CD4-positive, alpha-beta memory T cell (primary cell): ENCODE measurements at regions of chr9 and their contacts with region 1.

Region 1: GRCh38 chr9:19174127-19174912 is 47.0 kb upstream of the PLIN2 start:
- DNase-seq: peak; percentile 34 to 56 (median 46)
- H3K4me3 ChIP-seq: no peak overlapping the region
- H3K4me3 Mint-ChIP-seq: peak overlapping the region in 1 of 8 donors; percentile 43
- H3K27ac ChIP-seq: no peak overlapping the region
- H3K27ac Mint-ChIP-seq: peak overlapping the region in 5 of 7 donors; percentile 25 to 83 (median 66)
- H3K4me1 ChIP-seq: peaks cover 18% of the 10 kb centered on the region
- H3K4me1 Mint-ChIP-seq: peaks cover 18 to 35% (median 26%) of the 10 kb centered on the region in 4 donors
- H3K27me3 ChIP-seq: no peaks in the 10 kb centered on the region
- H3K27me3 Mint-ChIP-seq: no peaks in the 10 kb centered on the region

Region 2: GRCh38 chr9:18255158-18255629 is 919.1 kb before region 1 on chr9:
- CTCF ChIA-PET with region 1: interaction called, 16 read pairs
- POLR2A ChIA-PET with region 1: no interaction called
- intact Hi-C with region 1: loop called (anchors 1 kb)
- DNase-seq: peak; percentile 42 to 59 (median 56)
- H3K4me3 ChIP-seq: no peak overlapping the region
- H3K4me3 Mint-ChIP-seq: no peak overlapping the region
- H3K27ac ChIP-seq: no peak overlapping the region
- H3K27ac Mint-ChIP-seq: no peak overlapping the region
- H3K4me1 ChIP-seq: no peaks in the 10 kb centered on the region
- H3K4me1 Mint-ChIP-seq: peaks cover 0 to 4% (median 2%) of the 10 kb centered on the region in 4 donors
- H3K27me3 ChIP-seq: no peaks in the 10 kb centered on the region
- H3K27me3 Mint-ChIP-seq: peaks cover 8% of the 10 kb centered on the region in 2 donors

Region 3: DNA sequence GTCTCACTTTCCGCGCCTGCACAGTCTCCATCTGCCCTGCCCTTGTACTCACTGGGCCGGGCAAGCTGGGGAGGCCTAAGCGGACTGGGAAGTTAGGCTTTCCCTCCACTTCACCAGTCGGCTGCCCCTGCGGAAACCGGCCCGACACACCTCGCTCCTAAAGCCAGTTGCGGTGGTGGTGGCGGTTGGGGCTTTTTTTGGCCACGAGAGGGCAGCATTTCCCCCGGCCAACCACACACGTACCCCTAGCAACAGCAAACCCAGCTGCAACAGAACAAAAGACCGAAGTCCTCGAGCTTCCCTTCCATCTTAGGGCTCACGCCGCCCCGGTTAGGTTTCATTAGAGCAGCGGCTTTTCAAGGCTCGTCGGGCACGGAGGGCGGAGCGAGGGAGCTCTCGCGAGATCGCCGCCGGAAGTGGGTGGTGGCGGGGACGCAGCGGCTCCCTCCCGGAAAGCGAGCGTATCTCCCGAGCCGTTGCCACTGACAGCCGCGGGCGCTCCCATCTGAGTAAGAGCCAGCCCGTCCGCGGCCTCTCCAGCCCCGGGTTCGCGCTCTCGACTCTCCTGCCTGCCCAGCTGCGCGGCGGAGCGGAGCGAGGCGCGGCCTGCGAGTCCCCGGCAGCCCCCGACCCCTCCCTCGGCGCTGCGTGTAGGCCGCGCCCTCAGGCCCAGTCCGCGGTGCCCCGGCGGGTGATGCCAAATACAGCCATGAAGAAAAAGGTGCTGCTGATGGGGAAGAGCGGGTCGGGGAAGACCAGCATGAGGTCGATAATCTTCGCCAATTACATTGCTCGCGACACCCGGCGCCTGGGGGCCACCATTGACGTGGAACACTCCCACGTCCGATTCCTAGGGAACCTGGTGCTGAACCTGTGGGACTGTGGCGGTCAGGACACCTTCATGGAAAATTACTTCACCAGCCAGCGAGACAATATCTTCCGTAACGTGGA is 125.1 kb before region 1 on chr9 and contains the start of gene RRAGA:
- CTCF ChIA-PET with region 1: interaction called, 35 read pairs
- POLR2A ChIA-PET with region 1: interaction called, 28 read pairs
- intact Hi-C with region 1: loop called (anchors 1 kb)
- DNase-seq: peak; percentile 94 to 96 (median 95)
- H3K4me3 ChIP-seq: peak within 1 kb of the TSS; percentile 84 to 96
- H3K4me3 Mint-ChIP-seq: peak within 1 kb of the TSS; percentile 91 to 99 (median 96)
- H3K27ac ChIP-seq: peak within 1 kb of the TSS; percentile 87
- H3K27ac Mint-ChIP-seq: peak within 1 kb of the TSS; percentile 96 to 100 (median 99)
- H3K4me1 ChIP-seq: peaks cover 39% of the 10 kb centered on the region
- H3K4me1 Mint-ChIP-seq: peaks cover 21 to 56% (median 40%) of the 10 kb centered on the region in 4 donors
- H3K27me3 ChIP-seq: no peaks in the 10 kb centered on the region
- H3K27me3 Mint-ChIP-seq: no peaks in the 10 kb centered on the region
- total RNA-seq, gene RRAGA: 57.4 to 58.0 TPM

Region 4: GRCh38 chr9:19102631-19103345 is 71.5 kb before region 1 on chr9 and contains the start of gene HAUS6:
- CTCF ChIA-PET with region 1: interaction called, 12 read pairs
- POLR2A ChIA-PET with region 1: no interaction called
- intact Hi-C with region 1: loop called (anchors 5 kb)
- DNase-seq: peak; percentile 93 to 98 (median 96)
- H3K4me3 ChIP-seq: peak within 1 kb of the TSS; percentile 73 to 74
- H3K4me3 Mint-ChIP-seq: peak within 1 kb of the TSS; percentile 91 to 98 (median 98)
- H3K27ac ChIP-seq: peak within 1 kb of the TSS; percentile 74
- H3K27ac Mint-ChIP-seq: peak within 1 kb of the TSS; percentile 91 to 98 (median 96)
- H3K4me1 ChIP-seq: peaks cover 28% of the 10 kb centered on the region
- H3K4me1 Mint-ChIP-seq: peaks cover 15 to 39% (median 20%) of the 10 kb centered on the region in 4 donors
- H3K27me3 ChIP-seq: no peaks in the 10 kb centered on the region
- H3K27me3 Mint-ChIP-seq: no peaks in the 10 kb centered on the region
- total RNA-seq, gene HAUS6: 19.4 to 20.9 TPM

Region 5: GRCh38 chr9:19127881-19128500 is 46.3 kb before region 1 on chr9:
- CTCF ChIA-PET with region 1: interaction called, 23 read pairs
- POLR2A ChIA-PET with region 1: interaction called, 3 read pairs
- intact Hi-C with region 1: loop called (anchors 1 kb)
- DNase-seq: peak in 3 of 5 donors; percentile 36 to 52 (median 37)
- H3K4me3 ChIP-seq: peak overlapping the region; percentile 57 to 79
- H3K4me3 Mint-ChIP-seq: peak overlapping the region; percentile 92 to 98 (median 96)
- H3K27ac ChIP-seq: peak overlapping the region; percentile 73
- H3K27ac Mint-ChIP-seq: peak overlapping the region; percentile 90 to 96 (median 94)
- H3K4me1 ChIP-seq: peaks cover 61% of the 10 kb centered on the region
- H3K4me1 Mint-ChIP-seq: peaks cover 38 to 63% (median 48%) of the 10 kb centered on the region in 4 donors
- H3K27me3 ChIP-seq: no peaks in the 10 kb centered on the region
- H3K27me3 Mint-ChIP-seq: no peaks in the 10 kb centered on the region

Region 6: DNA sequence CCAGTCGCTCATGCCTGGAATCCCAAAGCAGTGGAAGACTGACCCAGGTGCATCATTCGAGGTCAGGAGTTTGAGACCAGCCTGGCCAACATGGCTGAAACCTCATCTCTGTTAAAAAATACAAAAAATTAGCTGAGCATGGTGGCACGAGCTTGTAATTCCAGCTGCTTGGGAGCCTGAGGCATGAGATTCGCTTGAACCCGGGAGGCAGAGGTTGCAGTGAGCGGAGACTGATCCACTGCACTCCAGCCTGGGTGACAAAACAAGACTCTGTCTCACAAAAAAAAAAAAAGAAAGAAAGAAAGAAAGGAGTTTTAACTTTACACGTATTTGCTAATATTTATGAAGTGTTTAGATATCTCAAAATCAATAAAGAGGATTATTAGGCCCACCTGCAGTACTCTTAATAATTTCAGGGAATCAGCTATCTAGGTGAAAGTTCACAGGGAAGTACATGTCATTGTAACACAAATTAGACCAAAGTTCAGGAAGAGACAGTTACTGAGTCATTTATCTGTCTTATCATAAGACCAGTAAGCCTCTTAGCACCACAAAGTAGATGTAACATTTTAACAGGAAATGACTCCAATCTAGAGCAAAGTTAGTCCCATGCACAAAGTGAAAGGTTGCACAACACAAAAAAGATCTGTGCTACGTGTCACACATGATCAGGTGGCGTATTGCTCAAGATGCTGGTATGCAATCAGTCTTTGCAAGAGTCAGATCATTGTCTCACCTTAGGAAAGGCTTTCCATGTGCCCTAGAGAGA is 12.9 kb before region 1 on chr9:
- CTCF ChIA-PET with region 1: interaction called, 16 read pairs
- POLR2A ChIA-PET with region 1: interaction called, 7 read pairs
- intact Hi-C with region 1: no loop called
- DNase-seq: peak; percentile 50 to 75 (median 60)
- H3K4me3 ChIP-seq: no peak overlapping the region
- H3K4me3 Mint-ChIP-seq: peak overlapping the region in 7 of 8 donors; percentile 56 to 75 (median 67)
- H3K27ac ChIP-seq: peak overlapping the region; percentile 52
- H3K27ac Mint-ChIP-seq: peak overlapping the region; percentile 73 to 96 (median 89)
- H3K4me1 ChIP-seq: peaks cover 18% of the 10 kb centered on the region
- H3K4me1 Mint-ChIP-seq: peaks cover 11 to 19% (median 14%) of the 10 kb centered on the region in 4 donors
- H3K27me3 ChIP-seq: no peaks in the 10 kb centered on the region
- H3K27me3 Mint-ChIP-seq: no peaks in the 10 kb centered on the region

Region 7: DNA sequence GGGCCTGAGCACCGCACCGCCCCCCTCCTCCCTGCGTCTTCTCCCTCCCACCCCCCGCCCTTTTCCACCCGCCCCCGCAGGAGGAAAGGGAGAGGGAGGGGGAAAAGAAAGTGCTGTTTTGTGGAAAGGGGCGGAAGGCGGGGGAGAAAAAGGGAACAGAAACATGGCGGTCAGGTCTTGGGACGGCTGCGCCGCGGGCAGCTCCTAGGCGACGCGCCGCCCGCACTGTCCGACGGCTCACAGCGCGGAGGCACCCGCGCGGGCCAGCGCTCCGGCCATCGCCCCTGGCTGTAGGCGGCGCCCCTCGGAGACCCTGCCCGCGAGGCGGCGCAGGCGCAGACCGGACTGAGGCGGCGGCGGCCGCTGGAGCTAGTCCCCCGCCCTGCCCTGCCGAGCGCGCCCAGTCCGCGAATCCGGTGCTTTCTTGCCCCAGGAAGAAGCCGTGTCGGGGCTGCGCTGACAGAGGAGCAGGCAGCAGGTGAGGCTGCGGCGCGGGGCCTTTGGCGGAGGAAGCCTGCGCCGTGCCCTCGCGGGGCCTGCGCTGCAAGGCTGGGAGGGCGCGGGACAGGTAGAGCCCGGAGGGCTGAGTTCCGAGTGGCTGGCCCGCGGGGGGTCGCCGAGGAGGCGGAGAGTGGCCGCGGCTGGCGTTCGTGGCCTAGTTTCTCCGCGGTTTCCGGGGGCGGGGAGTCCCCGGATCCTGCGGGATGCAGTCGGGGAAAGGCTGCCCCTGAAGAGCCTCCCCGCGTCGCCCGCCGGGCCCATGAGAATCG is 56.2 kb after region 1 on chr9 and contains the start of gene DENND4C:
- CTCF ChIA-PET with region 1: interaction called, 12 read pairs
- POLR2A ChIA-PET with region 1: interaction called, 4 read pairs
- intact Hi-C with region 1: no loop called
- DNase-seq: peak; percentile 85 to 87 (median 85)
- H3K4me3 ChIP-seq: peak within 1 kb of the TSS; percentile 53 to 73
- H3K4me3 Mint-ChIP-seq: peak within 1 kb of the TSS in 6 of 8 donors; percentile 82 to 89 (median 88)
- H3K27ac ChIP-seq: peak within 1 kb of the TSS; percentile 73
- H3K27ac Mint-ChIP-seq: peak within 1 kb of the TSS in 6 of 7 donors; percentile 62 to 93 (median 90)
- H3K4me1 ChIP-seq: peaks cover 25% of the 10 kb centered on the region
- H3K4me1 Mint-ChIP-seq: peaks cover 5 to 11% (median 9%) of the 10 kb centered on the region in 4 donors
- H3K27me3 ChIP-seq: no peaks in the 10 kb centered on the region
- H3K27me3 Mint-ChIP-seq: no peaks in the 10 kb centered on the region
- total RNA-seq, gene DENND4C: 69.0 to 71.8 TPM